ENCODE measurements at regions of chr7 and their contacts with region 1.

Region 1: DNA sequence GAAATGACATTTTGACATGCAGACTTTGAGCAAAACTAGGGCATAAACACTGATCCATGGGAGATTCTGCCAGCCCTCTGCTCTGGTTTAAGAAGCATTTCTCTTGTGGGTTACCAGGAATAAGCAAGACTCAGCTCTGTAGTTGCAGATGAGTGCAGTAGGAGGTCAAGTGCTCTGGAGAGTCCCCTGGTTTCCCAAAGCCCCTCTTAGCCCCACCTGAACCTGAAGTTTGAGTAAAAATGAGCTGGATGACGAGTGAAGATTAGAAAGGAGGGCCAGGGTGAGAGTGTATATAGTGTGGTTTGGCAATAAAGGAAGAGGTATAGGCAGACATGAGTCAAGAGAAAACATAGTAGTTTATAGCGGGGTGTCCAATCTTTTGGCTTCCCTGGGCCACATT is 220.3 kb downstream of the ARL4A start:
- DNase-seq: no peak
- ATAC-seq: no peak
- H3K4me3 Mint-ChIP-seq: no peak overlapping the region
- H3K27ac Mint-ChIP-seq: no peak overlapping the region
- H3K4me1 Mint-ChIP-seq: no peaks in the 10 kb centered on the region
- H3K27me3 Mint-ChIP-seq: no peaks in the 10 kb centered on the region
- CTCF ChIP-seq: no peak

Region 2: DNA sequence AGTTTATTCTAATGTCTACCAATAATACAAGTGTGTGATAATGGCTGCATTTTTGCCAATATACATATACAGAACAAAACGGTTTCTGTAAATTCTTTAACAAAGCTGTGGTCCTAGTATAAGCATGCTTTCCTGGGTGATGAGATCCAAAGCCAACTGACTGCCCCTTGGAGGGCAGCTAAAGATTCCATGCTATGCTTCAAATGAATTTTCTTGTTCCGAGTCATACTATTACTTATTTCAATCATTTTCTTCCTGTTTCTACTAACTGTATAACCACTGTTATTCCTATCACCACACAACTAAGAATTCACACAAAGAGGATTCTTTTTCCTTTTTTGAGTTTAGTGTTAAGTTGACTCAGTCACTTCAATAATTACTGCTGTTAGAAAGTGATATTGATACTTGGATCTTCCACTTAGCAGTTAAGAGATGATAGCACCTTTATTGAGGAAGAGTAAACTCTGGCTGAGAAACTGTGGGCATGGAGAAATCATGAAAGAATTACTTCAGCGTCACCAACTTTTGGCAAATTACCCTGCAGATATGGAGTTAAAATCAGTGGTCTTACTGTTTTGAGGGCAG is 22.8 kb before region 1 on chr7:
- CTCF ChIA-PET with region 1: no interaction called
- POLR2A ChIA-PET with region 1: no interaction called
- intact Hi-C with region 1: no loop called
- DNase-seq: no peak
- ATAC-seq: no peak
- H3K4me3 Mint-ChIP-seq: no peak overlapping the region
- H3K27ac Mint-ChIP-seq: no peak overlapping the region
- H3K4me1 Mint-ChIP-seq: no peaks in the 10 kb centered on the region
- H3K27me3 Mint-ChIP-seq: no peaks in the 10 kb centered on the region
- CTCF ChIP-seq: no peak

Region 3: DNA sequence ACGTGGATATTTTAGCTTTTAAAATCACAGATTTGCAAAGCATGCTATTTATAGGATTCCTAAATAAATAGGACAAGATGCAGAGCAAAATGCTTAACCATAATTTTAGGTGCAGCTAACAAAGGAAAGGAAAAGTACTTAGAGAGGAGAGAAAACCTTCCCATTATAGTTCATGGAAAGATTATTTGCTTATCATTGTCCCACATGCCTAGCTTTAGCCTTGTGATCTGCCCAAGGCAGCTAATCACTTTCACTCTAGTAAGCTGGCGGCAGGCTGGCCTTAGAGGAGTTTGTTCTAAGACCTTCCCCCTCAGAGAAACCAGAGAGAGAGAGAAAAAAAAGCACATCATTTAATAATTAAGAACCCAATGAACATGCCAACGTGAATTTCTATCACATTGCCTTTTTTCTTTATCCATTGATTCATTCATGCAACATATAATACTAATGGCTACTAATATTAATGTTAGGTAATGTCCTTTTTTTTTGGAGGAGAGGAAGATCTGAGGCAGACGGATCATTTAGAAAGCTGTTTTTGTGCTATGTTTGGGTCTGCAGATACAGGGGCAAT is 54.2 kb after region 1 on chr7:
- CTCF ChIA-PET with region 1: no interaction called
- POLR2A ChIA-PET with region 1: no interaction called
- intact Hi-C with region 1: loop called (anchors 10 kb)
- DNase-seq: no peak
- ATAC-seq: no peak
- H3K4me3 Mint-ChIP-seq: no peak overlapping the region
- H3K27ac Mint-ChIP-seq: no peak overlapping the region
- H3K4me1 Mint-ChIP-seq: no peaks in the 10 kb centered on the region
- H3K27me3 Mint-ChIP-seq: no peaks in the 10 kb centered on the region
- CTCF ChIP-seq: no peak